Activated B cell treated with CpG ODN at 0.5 μM for 24 hours (primary cell): ENCODE measurements at regions of chr12 and their contacts with region 1.

Region 1: DNA sequence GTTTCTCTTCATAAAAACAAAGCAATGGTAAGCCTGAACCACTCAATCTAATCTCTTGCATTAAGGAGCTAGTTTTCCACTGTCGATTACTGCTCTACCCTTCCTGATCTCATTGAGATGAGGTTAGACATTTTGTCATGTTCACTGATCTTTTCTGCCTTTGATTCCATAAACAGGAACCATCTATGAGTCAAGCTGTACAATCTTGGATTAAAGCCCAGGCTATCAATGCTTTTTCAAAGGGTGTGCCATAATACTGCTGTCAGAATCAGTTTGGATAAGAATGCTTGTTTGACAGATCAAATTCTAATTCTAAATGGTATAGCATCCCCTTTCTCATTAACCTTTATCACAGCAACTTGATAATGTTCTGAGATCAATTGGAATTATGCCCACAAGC is 16.1 kb downstream of the GRIP1 start:
- DNase-seq: no peak
- ATAC-seq: peak; percentile 4
- H3K4me3 Mint-ChIP-seq: peak overlapping the region; percentile 50
- H3K27ac Mint-ChIP-seq: peak overlapping the region; percentile 30
- H3K4me1 Mint-ChIP-seq: peaks cover 46% of the 10 kb centered on the region
- H3K27me3 Mint-ChIP-seq: no peaks in the 10 kb centered on the region
- CTCF ChIP-seq: no peak

Region 2: GRCh38 chr12:66196806-66197205 is 465.9 kb before region 1 on chr12:
- CTCF ChIA-PET with region 1: no interaction called
- POLR2A ChIA-PET with region 1: no interaction called
- intact Hi-C with region 1: loop called (anchors 1 kb)
- DNase-seq: no peak
- ATAC-seq: peak; percentile 95
- H3K4me3 Mint-ChIP-seq: peak overlapping the region; percentile 52
- H3K27ac Mint-ChIP-seq: peak overlapping the region; percentile 41
- H3K4me1 Mint-ChIP-seq: peaks cover 32% of the 10 kb centered on the region
- H3K27me3 Mint-ChIP-seq: peaks cover 11% of the 10 kb centered on the region
- CTCF ChIP-seq: no peak

Region 3: DNA sequence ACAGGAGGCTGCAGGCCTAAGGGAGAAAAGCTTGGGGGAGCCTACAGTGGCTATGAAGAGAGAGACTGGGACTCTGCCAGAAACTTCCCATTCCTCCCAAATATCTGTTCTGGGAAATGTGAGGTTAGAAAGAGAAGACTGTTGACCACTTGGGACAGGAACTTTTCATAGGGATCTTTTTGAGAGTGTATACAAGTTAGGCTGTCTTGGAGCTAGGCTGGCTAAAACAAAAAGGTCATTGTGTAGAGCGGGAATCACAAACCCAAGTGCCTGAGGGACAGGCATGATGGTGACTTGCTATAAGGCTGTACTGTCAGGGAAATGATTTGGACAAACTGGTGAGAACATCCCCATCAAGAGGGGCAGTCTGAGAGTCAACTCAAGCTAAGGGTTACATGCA is 159.0 kb before region 1 on chr12:
- CTCF ChIA-PET with region 1: no interaction called
- POLR2A ChIA-PET with region 1: no interaction called
- intact Hi-C with region 1: no loop called
- DNase-seq: no peak
- ATAC-seq: no peak
- H3K4me3 Mint-ChIP-seq: no peak overlapping the region
- H3K27ac Mint-ChIP-seq: no peak overlapping the region
- H3K4me1 Mint-ChIP-seq: no peaks in the 10 kb centered on the region
- H3K27me3 Mint-ChIP-seq: no peaks in the 10 kb centered on the region
- CTCF ChIP-seq: no peak

Region 4: GRCh38 chr12:66624806-66625205 is 37.9 kb before region 1 on chr12:
- CTCF ChIA-PET with region 1: no interaction called
- POLR2A ChIA-PET with region 1: interaction called, 6 read pairs
- intact Hi-C with region 1: loop called (anchors 1 kb)
- DNase-seq: no peak
- ATAC-seq: peak; percentile 72
- H3K4me3 Mint-ChIP-seq: peak overlapping the region; percentile 47
- H3K27ac Mint-ChIP-seq: peak overlapping the region; percentile 46
- H3K4me1 Mint-ChIP-seq: peaks cover 65% of the 10 kb centered on the region
- H3K27me3 Mint-ChIP-seq: no peaks in the 10 kb centered on the region
- CTCF ChIP-seq: no peak

Region 5: DNA sequence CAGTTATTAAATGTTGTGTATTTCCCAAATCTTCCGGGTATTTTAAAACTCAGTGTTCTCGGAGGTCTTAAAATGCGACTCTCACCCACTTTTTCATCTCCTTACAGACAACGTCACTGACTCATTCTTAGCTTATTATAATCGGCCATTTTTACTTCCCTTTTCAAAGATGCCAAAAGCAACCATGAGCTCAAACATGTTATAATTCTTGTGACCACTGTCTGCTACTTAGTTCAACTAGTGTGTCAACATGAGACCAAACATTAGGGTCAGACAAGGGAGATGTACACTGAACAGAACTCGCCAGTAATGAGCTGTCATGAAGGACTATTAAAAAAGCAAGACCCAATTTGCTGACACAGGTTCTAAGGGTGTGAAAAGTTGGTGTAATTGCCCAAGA is 20.3 kb after region 1 on chr12:
- CTCF ChIA-PET with region 1: no interaction called
- POLR2A ChIA-PET with region 1: interaction called, 10 read pairs
- intact Hi-C with region 1: loop called (anchors 2 kb)
- DNase-seq: no peak
- ATAC-seq: peak; percentile 25
- H3K4me3 Mint-ChIP-seq: no peak overlapping the region
- H3K27ac Mint-ChIP-seq: peak overlapping the region; percentile 5
- H3K4me1 Mint-ChIP-seq: peaks cover 39% of the 10 kb centered on the region
- H3K27me3 Mint-ChIP-seq: no peaks in the 10 kb centered on the region
- CTCF ChIP-seq: no peak